Gastrocnemius medialis (tissue), 4 donors: ENCODE measurements at regions of chr14 and their contacts with region 1.

Region 1: GRCh38 chr14:102139248-102140026 is at the start of gene WDR20:
- DNase-seq: peak; percentile 98
- ATAC-seq: peak; percentile 97
- H3K4me3 ChIP-seq: peak within 1 kb of the TSS; percentile 63 to 99 (median 87)
- H3K27ac ChIP-seq: peak within 1 kb of the TSS; percentile 85 to 93 (median 92)
- H3K4me1 ChIP-seq: peaks cover 20 to 25% of the 10 kb centered on the region in 2 donors
- H3K27me3 ChIP-seq: no peaks in the 10 kb centered on the region
- CTCF ChIP-seq: no peak
- POLR2A ChIP-seq: peak; percentile 55 to 59
- total RNA-seq, gene WDR20: 18.1 to 49.7 (median 21.0) TPM

Region 2: DNA sequence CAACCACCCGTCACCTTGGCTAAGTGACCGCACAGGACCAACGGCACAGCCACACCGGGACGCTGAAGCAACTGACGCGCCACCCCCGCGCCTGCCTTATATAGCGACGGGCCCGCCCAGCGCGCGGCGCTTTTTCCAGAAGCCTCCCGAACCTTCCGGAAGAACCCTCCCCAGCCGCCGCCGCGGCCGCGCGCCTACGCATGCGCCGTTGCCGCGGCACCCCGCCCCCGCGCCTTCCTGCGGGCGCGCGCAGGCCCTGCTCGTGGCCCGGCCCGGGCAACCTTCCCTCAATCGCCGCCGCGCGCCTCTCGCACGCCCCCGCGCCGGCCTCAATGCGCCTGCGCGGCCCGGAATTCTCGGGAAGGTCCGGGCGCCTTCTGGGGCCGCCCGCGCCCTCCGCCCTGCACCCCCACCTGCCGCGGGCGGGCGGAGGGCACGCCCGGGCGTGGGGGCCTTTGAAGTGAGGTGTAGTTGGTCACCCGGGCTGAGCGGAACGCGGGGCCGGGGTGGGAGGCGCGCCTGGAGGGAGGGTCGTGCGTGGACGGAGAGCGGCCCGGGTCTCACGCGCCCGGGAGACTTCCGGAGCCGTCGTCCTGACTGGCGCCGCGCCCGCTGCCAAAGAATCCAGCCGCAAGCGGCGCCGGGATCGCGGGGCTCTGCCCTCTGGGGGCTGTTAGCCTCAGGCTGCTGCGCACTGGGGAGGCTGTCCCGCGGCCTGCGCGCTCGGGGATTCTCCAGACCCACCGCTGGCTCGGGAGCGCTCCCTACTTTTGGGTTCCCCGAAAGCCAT is 52.3 kb before region 1 on chr14 and contains the start of gene HSP90AA1:
- in situ Hi-C with region 1: no loop called
- intact Hi-C with region 1: loop called (anchors 1 kb)
- DNase-seq: peak; percentile 84 to 93
- ATAC-seq: peak; percentile 88 to 90
- H3K4me3 ChIP-seq: peak within 1 kb of the TSS; percentile 72 to 93 (median 90)
- H3K27ac ChIP-seq: peak within 1 kb of the TSS; percentile 96 to 99 (median 99)
- H3K4me1 ChIP-seq: peaks cover 26 to 43% of the 10 kb centered on the region in 2 donors
- H3K27me3 ChIP-seq: no peaks in the 10 kb centered on the region
- CTCF ChIP-seq: peak in 2 of 5 experiments; percentile 25 to 32
- POLR2A ChIP-seq: peak; percentile 97 to 99
- total RNA-seq, gene HSP90AA1: 227 to 609 (median 488) TPM

Region 3: DNA sequence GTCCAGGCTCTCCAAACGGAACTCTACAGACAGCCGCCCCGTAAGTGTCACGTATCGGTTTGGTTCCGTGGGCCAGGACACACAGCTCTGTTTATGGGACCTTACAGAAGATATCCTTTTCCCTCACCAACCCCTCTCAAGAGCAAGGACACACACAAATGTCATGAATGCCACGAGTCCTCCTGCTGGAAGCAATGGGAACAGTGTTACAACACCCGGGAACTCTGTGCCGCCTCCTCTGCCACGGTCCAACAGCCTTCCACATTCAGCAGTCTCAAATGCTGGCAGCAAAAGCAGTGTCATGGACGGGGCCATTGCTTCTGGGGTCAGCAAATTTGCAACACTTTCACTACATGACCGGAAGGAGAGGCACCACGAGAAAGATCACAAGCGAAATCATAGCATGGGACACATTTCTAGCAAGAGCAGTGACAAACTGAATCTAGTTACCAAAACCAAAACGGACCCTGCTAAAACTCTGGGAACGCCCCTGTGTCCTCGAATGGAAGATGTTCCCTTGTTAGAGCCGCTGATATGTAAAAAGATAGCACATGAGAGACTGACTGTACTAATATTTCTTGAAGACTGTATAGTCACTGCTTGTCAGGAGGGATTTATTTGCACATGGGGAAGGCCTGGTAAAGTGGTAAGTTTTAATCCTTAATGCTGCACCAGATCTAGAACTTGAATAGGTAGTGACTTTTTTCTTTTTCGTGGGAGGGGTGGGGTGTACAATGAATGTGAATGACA is 70.0 kb after region 1 on chr14:
- in situ Hi-C with region 1: no loop called
- intact Hi-C with region 1: loop called (anchors 2 kb)
- DNase-seq: peak; percentile 30 to 87
- ATAC-seq: peak; percentile 81 to 98
- H3K4me3 ChIP-seq: no peak overlapping the region
- H3K27ac ChIP-seq: peak overlapping the region; percentile 5 to 78 (median 62)
- H3K4me1 ChIP-seq: peaks cover 1 to 7% of the 10 kb centered on the region in 2 donors
- H3K27me3 ChIP-seq: no peaks in the 10 kb centered on the region
- CTCF ChIP-seq: peak; percentile 30 to 61 (median 50)
- POLR2A ChIP-seq: no peak